Esophagus muscularis mucosa (tissue), 4 donors: ENCODE measurements at regions of chr17 and their contacts with region 1.

Region 1: GRCh38 chr17:78708510-78708973 is 73.5 kb downstream of the CYTH1 start:
- DNase-seq: no peak
- H3K4me3 ChIP-seq: no peak overlapping the region
- H3K27ac ChIP-seq: no peak overlapping the region
- H3K4me1 ChIP-seq: peaks cover 6 to 50% (median 44%) of the 10 kb centered on the region in 4 donors
- H3K27me3 ChIP-seq: no peaks in the 10 kb centered on the region
- CTCF ChIP-seq: peak; percentile 78 to 86 (median 84)
- EP300 ChIP-seq: no peak
- POLR2A ChIP-seq: no peak

Region 2: DNA sequence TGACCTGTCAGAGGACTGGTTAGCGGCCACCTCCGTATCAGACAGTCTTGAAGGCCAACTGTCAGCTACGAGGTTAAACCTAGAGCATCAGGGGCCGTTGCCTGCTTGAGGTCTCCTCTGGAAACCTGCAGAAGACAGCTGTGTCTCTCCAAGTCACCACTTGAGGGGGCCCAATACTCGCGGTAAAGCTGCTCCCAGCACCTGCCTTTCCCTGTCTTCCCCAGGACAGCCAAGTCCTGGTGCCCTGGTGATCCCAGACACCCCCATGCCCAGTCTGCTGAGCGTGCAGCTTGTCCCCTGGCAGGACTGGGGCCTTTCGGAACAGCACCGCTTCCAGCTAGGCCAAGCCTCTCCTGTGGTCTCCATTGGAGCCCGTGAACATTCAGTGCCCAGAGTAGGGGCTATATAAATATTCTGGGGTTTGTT is 211.4 kb before region 1 on chr17:
- intact Hi-C with region 1: loop called (anchors 2 kb)
- DNase-seq: no peak
- H3K4me3 ChIP-seq: no peak overlapping the region
- H3K27ac ChIP-seq: no peak overlapping the region
- H3K4me1 ChIP-seq: peaks cover 0 to 8% (median 0%) of the 10 kb centered on the region in 4 donors
- H3K27me3 ChIP-seq: peaks cover 0 to 17% (median 0%) of the 10 kb centered on the region in 4 donors
- CTCF ChIP-seq: peak; percentile 71 to 82 (median 75)
- EP300 ChIP-seq: no peak
- POLR2A ChIP-seq: no peak